Heart right ventricle (tissue), 16 donors: ENCODE measurements at regions of chr1 and their contacts with region 1.

Region 1: GRCh38 chr1:74771913-74772515 is 39.1 kb downstream of the TYW3 start:
- DNase-seq: peak in 1 of 2 donors; percentile 9
- ATAC-seq: no peak
- H3K4me3 ChIP-seq: no peak overlapping the region
- H3K27ac ChIP-seq: no peak overlapping the region
- H3K4me1 ChIP-seq: no peaks in the 10 kb centered on the region
- H3K27me3 ChIP-seq: peaks cover 0 to 44% (median 15%) of the 10 kb centered on the region in 7 donors
- CTCF ChIP-seq: peak; percentile 52 to 86 (median 75)

Region 2: GRCh38 chr1:74748960-74749359 is 23.1 kb before region 1 on chr1:
- intact Hi-C with region 1: no loop called
- DNase-seq: no peak
- ATAC-seq: no peak
- H3K4me3 ChIP-seq: no peak overlapping the region
- H3K27ac ChIP-seq: no peak overlapping the region
- H3K4me1 ChIP-seq: no peaks in the 10 kb centered on the region
- H3K27me3 ChIP-seq: no peaks in the 10 kb centered on the region
- CTCF ChIP-seq: no peak

Region 3: GRCh38 chr1:75203415-75204277 is 431.6 kb after region 1 on chr1:
- intact Hi-C with region 1: loop called (anchors 2 to 10 kb)
- DNase-seq: no peak
- ATAC-seq: peak in 1 of 8 donors; percentile 59
- H3K4me3 ChIP-seq: no peak overlapping the region
- H3K27ac ChIP-seq: no peak overlapping the region
- H3K4me1 ChIP-seq: no peaks in the 10 kb centered on the region
- H3K27me3 ChIP-seq: peaks cover 0 to 4% (median 0%) of the 10 kb centered on the region in 7 donors
- CTCF ChIP-seq: peak; percentile 33 to 72 (median 63)

Region 4: DNA sequence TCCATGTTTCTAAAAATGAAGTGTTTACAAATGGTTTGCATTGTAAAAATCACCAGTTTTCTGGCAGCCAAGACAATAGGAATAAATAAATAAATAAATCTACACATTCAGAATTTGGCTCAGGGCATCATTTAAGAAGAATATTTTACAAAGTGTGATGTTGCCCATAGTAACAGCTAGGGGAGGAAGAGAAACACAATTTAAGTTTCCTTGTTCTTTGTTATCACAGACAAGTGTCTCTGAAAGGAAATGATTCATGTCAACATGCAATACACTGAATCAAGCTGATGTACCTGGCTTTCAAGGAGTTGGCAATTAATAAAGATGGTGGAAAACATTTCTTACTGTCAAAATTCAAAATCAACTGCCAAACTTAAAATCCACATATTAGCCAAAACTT is 436.8 kb after region 1 on chr1:
- intact Hi-C with region 1: loop called in 7 of 10 experiments (anchors 2 to 10 kb)
- DNase-seq: no peak
- ATAC-seq: no peak
- H3K4me3 ChIP-seq: no peak overlapping the region
- H3K27ac ChIP-seq: no peak overlapping the region
- H3K4me1 ChIP-seq: no peaks in the 10 kb centered on the region
- H3K27me3 ChIP-seq: no peaks in the 10 kb centered on the region
- CTCF ChIP-seq: no peak